ENCODE measurements at regions of chr18 and their contacts with region 1.

Region 1: GRCh38 chr18:22473366-22473765 is 55.7 kb upstream of the CTAGE1 start:
- DNase-seq: no peak
- ATAC-seq: no peak
- H3K4me3 ChIP-seq: no peak overlapping the region
- H3K27ac ChIP-seq: no peak overlapping the region
- H3K4me1 ChIP-seq: peaks cover 22% of the 10 kb centered on the region
- H3K27me3 ChIP-seq: no peaks in the 10 kb centered on the region
- CTCF ChIP-seq: no peak
- POLR2A ChIP-seq: no peak
- RAD21 ChIP-seq: no peak

Region 2: DNA sequence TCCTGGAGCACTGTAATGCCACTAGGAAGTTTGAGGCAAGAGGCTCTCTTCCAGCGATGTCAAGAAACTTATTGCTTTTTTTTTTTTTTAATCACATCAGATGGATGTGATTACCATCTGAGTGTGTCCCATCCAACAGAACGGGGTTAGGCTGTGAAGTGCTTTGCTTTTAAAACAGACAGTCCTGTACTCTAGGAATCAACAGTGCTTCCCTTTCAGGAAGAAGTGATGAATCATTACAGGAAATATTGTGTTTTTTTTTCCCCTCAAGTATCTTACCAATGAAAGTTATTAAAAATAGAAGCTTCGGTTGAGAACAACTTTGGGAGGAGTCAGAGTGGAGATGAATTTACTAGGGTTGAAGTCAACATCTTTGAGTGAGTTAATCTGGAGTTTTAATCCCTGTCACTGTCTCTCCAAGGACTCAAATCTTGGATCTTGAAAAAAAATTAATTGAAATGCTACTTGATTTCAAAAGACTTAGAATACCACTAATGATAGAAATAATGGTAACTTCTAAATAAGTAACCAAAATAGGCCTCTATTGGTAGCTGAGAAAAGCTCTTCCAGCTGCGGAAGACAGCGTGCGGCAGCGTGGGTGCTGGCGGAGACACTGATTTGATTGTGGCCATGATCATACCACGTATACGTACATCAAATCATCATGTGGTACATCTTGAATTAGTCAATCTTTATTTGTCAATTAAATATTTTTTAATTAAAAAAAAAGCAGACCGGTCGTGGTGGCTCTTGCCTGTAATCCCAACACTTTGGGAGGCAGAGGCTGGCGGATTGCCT is 258.4 kb before region 1 on chr18:
- CTCF ChIA-PET with region 1: no interaction called
- POLR2A ChIA-PET with region 1: no interaction called
- dilution Hi-C with region 1: no loop called
- in situ Hi-C with region 1: no loop called
- intact Hi-C with region 1: no loop called
- DNase-seq: peak; percentile 57
- ATAC-seq: peak; percentile 32
- H3K4me3 ChIP-seq: no peak overlapping the region
- H3K27ac ChIP-seq: no peak overlapping the region
- H3K4me1 ChIP-seq: peaks cover 3% of the 10 kb centered on the region
- H3K27me3 ChIP-seq: no peaks in the 10 kb centered on the region
- CTCF ChIP-seq: no peak
- POLR2A ChIP-seq: no peak
- RAD21 ChIP-seq: no peak

Region 3: GRCh38 chr18:22486667-22487066 is 13.3 kb after region 1 on chr18:
- CTCF ChIA-PET with region 1: interaction called, 3 read pairs
- POLR2A ChIA-PET with region 1: no interaction called
- dilution Hi-C with region 1: no loop called
- in situ Hi-C with region 1: no loop called
- intact Hi-C with region 1: loop called (anchors 1 kb)
- DNase-seq: no peak
- ATAC-seq: no peak; the same call in 1 of the 2 replicates
- H3K4me3 ChIP-seq: no peak overlapping the region
- H3K27ac ChIP-seq: peak overlapping the region; percentile 81; the same call in 1 of the 2 replicates
- H3K4me1 ChIP-seq: peaks cover 2% of the 10 kb centered on the region; the same call in 1 of the 2 replicates
- H3K27me3 ChIP-seq: no peaks in the 10 kb centered on the region
- CTCF ChIP-seq: no peak
- POLR2A ChIP-seq: no peak
- RAD21 ChIP-seq: no peak

Region 4: GRCh38 chr18:22504251-22505030 is 31.1 kb after region 1 on chr18:
- CTCF ChIA-PET with region 1: no interaction called
- POLR2A ChIA-PET with region 1: no interaction called
- dilution Hi-C with region 1: no loop called
- in situ Hi-C with region 1: no loop called
- intact Hi-C with region 1: no loop called
- DNase-seq: peak; percentile 68
- ATAC-seq: peak; percentile 41
- H3K4me3 ChIP-seq: no peak overlapping the region
- H3K27ac ChIP-seq: peak overlapping the region; percentile 93
- H3K4me1 ChIP-seq: peaks cover 14% of the 10 kb centered on the region
- H3K27me3 ChIP-seq: no peaks in the 10 kb centered on the region
- CTCF ChIP-seq: no peak
- POLR2A ChIP-seq: no peak
- RAD21 ChIP-seq: no peak

Measured in IMR-90 (cell line).